Activated CD8-positive, alpha-beta T cell treated with anti-CD3 and anti-CD28 coated beads for 36 hours (primary cell): ENCODE measurements at regions of chr11 and their contacts with region 1.

Region 1: GRCh38 chr11:63635762-63636465 is 21.7 kb upstream of the PLAAT3 start:
- DNase-seq: peak; percentile 76
- ATAC-seq: peak; percentile 83
- H3K4me3 Mint-ChIP-seq: no peak overlapping the region
- H3K27ac Mint-ChIP-seq: no peak overlapping the region
- H3K4me1 Mint-ChIP-seq: peaks cover 11% of the 10 kb centered on the region
- H3K27me3 Mint-ChIP-seq: no peaks in the 10 kb centered on the region
- CTCF ChIP-seq: peak; percentile 86

Region 2: DNA sequence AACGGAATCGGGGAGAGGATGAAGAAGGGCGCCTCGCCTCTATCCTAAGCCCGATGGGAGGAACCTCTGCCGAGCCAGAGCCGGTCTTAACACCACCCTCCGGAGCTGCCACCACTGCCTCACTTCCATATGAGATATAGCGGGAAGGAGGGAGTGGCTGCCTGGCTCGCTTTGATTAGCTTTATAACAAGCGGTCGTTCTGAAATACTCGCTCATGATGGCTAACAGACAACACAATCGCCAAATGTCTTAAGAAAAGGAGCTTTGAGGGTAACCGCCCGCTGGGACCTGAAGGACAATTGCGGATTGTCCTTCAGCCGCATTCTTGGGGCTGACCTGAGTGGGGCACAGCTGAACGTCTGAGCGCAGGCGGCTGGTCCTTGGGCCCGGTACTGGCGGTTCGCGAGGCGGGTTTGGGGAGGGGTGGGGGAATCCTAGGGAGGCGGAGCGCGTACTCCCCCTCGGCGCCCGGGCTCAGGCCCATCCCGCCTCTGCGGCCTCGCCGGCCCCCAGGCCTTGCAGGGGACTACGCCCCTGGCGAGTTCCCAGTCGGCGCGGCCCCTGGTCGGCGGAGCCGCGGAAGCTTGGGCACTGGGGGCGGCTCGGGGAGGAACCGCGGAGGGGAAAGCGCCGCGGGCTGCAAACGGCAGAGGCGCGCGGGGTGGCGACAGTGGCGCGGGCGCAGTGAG is 145.2 kb before region 1 on chr11 and contains the start of gene PLAAT5:
- CTCF ChIA-PET with region 1: interaction called, 10 read pairs
- POLR2A ChIA-PET with region 1: no interaction called
- intact Hi-C with region 1: no loop called
- DNase-seq: peak; percentile 21
- ATAC-seq: peak; percentile 56
- H3K4me3 Mint-ChIP-seq: peak within 1 kb of the TSS; percentile 74
- H3K27ac Mint-ChIP-seq: no peak within 1 kb of the TSS
- H3K4me1 Mint-ChIP-seq: peaks cover 9% of the 10 kb centered on the region
- H3K27me3 Mint-ChIP-seq: peaks cover 20% of the 10 kb centered on the region
- CTCF ChIP-seq: no peak
- total RNA-seq, gene PLAAT5: 0.16 to 0.29 TPM

Region 3: DNA sequence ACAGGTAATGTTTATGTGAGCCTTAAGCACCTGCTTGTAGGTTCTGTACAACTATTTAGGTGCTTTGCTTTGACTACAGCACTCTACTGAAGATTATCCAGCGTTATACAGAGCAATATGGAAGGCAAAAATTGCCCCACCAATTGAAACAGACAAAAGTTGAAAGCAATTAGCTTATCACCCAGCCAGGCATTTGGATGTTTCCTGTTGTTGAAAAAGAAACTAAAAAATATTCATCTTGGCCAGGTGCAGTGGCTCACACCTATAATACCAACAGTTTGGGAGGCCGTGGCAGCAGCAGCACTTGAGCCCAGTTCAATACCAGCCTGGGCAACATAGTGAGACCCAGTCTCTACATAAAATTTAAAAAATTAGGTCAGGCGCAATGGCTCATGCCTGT is 16.8 kb after region 1 on chr11:
- CTCF ChIA-PET with region 1: interaction called, 15 read pairs
- POLR2A ChIA-PET with region 1: interaction called, 3 read pairs
- intact Hi-C with region 1: no loop called
- DNase-seq: no peak
- ATAC-seq: no peak
- H3K4me3 Mint-ChIP-seq: no peak overlapping the region
- H3K27ac Mint-ChIP-seq: no peak overlapping the region
- H3K4me1 Mint-ChIP-seq: peaks cover 8% of the 10 kb centered on the region
- H3K27me3 Mint-ChIP-seq: no peaks in the 10 kb centered on the region
- CTCF ChIP-seq: no peak

Region 4: GRCh38 chr11:63920939-63921417 is 285.1 kb after region 1 on chr11:
- CTCF ChIA-PET with region 1: no interaction called
- POLR2A ChIA-PET with region 1: no interaction called
- intact Hi-C with region 1: no loop called
- DNase-seq: peak; percentile 68
- ATAC-seq: no peak
- H3K4me3 Mint-ChIP-seq: no peak overlapping the region
- H3K27ac Mint-ChIP-seq: no peak overlapping the region
- H3K4me1 Mint-ChIP-seq: peaks cover 14% of the 10 kb centered on the region
- H3K27me3 Mint-ChIP-seq: no peaks in the 10 kb centered on the region
- CTCF ChIP-seq: peak; percentile 70